CD4-positive, alpha-beta memory T cell (primary cell): ENCODE measurements at regions of chr10 and their contacts with region 1.

Region 1: GRCh38 chr10:97334370-97335175 is at the start of gene FRAT2:
- DNase-seq: peak; percentile 86 to 95 (median 92)
- H3K4me3 ChIP-seq: peak within 1 kb of the TSS; percentile 64 to 67
- H3K4me3 Mint-ChIP-seq: peak within 1 kb of the TSS; percentile 88 to 95 (median 92)
- H3K27ac ChIP-seq: peak within 1 kb of the TSS; percentile 98
- H3K27ac Mint-ChIP-seq: peak within 1 kb of the TSS; percentile 88 to 95 (median 93)
- H3K4me1 ChIP-seq: peaks cover 35% of the 10 kb centered on the region
- H3K4me1 Mint-ChIP-seq: peaks cover 26 to 44% (median 34%) of the 10 kb centered on the region in 4 donors
- H3K27me3 ChIP-seq: no peaks in the 10 kb centered on the region
- H3K27me3 Mint-ChIP-seq: peaks cover 0 to 1% of the 10 kb centered on the region in 2 donors
- total RNA-seq, gene FRAT2: 28.7 to 30.4 TPM

Region 2: GRCh38 chr10:97222326-97222961 is 112.1 kb before region 1 on chr10:
- CTCF ChIA-PET with region 1: no interaction called
- POLR2A ChIA-PET with region 1: no interaction called
- intact Hi-C with region 1: no loop called
- DNase-seq: no peak
- H3K4me3 ChIP-seq: no peak overlapping the region
- H3K4me3 Mint-ChIP-seq: no peak overlapping the region
- H3K27ac ChIP-seq: no peak overlapping the region
- H3K27ac Mint-ChIP-seq: peak overlapping the region in 1 of 7 donors; percentile 11
- H3K4me1 ChIP-seq: no peaks in the 10 kb centered on the region
- H3K4me1 Mint-ChIP-seq: peaks cover 6 to 15% (median 7%) of the 10 kb centered on the region in 4 donors
- H3K27me3 ChIP-seq: no peaks in the 10 kb centered on the region
- H3K27me3 Mint-ChIP-seq: no peaks in the 10 kb centered on the region

Region 3: DNA sequence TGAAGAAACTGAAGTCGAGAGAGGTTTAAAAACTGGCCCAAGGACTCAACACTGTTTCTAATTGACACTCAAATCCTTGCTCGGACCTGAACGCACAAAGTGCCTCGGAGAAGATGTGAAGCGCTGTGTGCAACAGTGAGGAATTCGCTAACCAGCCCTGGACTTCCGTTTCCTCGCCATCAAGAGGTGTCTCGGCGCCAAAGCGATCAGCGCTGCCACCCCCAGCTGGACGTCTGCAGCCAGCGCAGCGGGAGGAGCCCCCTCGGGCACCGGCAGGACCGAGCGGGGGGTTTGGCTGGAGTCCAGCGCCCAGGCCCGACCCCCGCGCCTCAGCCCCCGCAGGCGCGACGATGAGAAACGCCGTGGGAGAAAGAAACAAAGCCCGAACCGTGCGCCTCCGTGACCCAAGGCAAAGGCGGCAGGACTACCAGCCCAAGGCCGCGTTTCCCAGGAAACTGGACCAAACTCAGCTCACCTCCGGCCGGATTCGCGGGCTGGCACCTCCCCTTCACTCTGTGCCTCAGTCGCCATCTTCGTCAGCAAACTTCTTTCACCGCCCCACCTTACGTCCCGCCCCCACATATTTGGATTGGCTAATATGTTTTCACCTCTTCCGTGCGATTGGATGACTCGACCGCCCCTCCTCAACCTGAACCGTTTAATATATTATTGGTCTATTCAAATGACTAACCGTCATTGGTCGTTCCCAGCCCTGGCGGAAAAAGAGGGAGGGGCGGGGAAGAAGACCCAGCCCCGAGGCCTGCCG is 42.3 kb before region 1 on chr10 and contains the start of gene ARHGAP19:
- CTCF ChIA-PET with region 1: interaction called, 4 read pairs
- POLR2A ChIA-PET with region 1: interaction called, 28 read pairs
- intact Hi-C with region 1: loop called (anchors 1 kb)
- DNase-seq: peak; percentile 94 to 98 (median 95)
- H3K4me3 ChIP-seq: peak within 1 kb of the TSS; percentile 76 to 85
- H3K4me3 Mint-ChIP-seq: peak within 1 kb of the TSS; percentile 90 to 99 (median 94)
- H3K27ac ChIP-seq: peak within 1 kb of the TSS; percentile 78
- H3K27ac Mint-ChIP-seq: peak within 1 kb of the TSS; percentile 85 to 97 (median 95)
- H3K4me1 ChIP-seq: peaks cover 11% of the 10 kb centered on the region
- H3K4me1 Mint-ChIP-seq: peaks cover 8 to 25% (median 20%) of the 10 kb centered on the region in 4 donors
- H3K27me3 ChIP-seq: no peaks in the 10 kb centered on the region
- H3K27me3 Mint-ChIP-seq: peaks cover 1 to 3% of the 10 kb centered on the region in 2 donors
- total RNA-seq, gene ARHGAP19: 17.0 to 19.3 TPM

Region 4: DNA sequence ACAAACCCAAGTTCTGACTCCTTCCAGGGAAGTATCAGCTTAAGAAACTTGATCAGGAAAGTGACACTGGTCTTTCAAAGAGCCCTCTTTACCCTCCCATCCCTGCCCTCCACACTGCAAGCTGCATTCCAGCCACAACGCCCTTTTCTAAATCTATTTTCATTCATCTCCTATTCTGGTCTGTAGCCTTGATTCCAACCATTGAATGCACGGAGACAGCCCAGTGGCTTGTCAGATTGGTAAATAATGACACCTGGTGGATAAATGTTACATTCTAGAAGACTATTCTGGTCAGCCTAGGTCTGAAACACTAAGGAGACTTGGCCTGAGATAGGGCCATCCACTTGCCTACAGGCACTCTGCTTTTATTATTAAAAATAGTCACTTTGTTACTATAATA is 277.8 kb after region 1 on chr10:
- CTCF ChIA-PET with region 1: no interaction called
- POLR2A ChIA-PET with region 1: no interaction called
- intact Hi-C with region 1: no loop called
- DNase-seq: no peak
- H3K4me3 ChIP-seq: no peak overlapping the region
- H3K4me3 Mint-ChIP-seq: no peak overlapping the region
- H3K27ac ChIP-seq: no peak overlapping the region
- H3K27ac Mint-ChIP-seq: no peak overlapping the region
- H3K4me1 ChIP-seq: no peaks in the 10 kb centered on the region
- H3K4me1 Mint-ChIP-seq: no peaks in the 10 kb centered on the region
- H3K27me3 ChIP-seq: no peaks in the 10 kb centered on the region
- H3K27me3 Mint-ChIP-seq: no peaks in the 10 kb centered on the region